ENCODE measurements at regions of chr18 and their contacts with region 1.

Region 1: GRCh38 chr18:58671111-58671631 is at the start of gene MALT1:
- DNase-seq: peak; percentile 88 to 98 (median 92)
- ATAC-seq: peak; percentile 95
- H3K4me3 ChIP-seq: peak within 1 kb of the TSS; percentile 95
- H3K4me3 Mint-ChIP-seq: peak within 1 kb of the TSS; percentile 93 to 98 (median 96)
- H3K27ac ChIP-seq: peak within 1 kb of the TSS; percentile 88
- H3K27ac Mint-ChIP-seq: peak within 1 kb of the TSS; percentile 92 to 96 (median 95)
- H3K4me1 ChIP-seq: peaks cover 26 to 34% of the 10 kb centered on the region in 2 donors
- H3K4me1 Mint-ChIP-seq: peaks cover 36 to 70% (median 58%) of the 10 kb centered on the region in 7 donors
- H3K27me3 ChIP-seq: no peaks in the 10 kb centered on the region
- H3K27me3 Mint-ChIP-seq: peaks cover 0 to 6% (median 0%) of the 10 kb centered on the region in 5 donors
- total RNA-seq, gene MALT1: 50.0 to 101 (median 80.0) TPM

Region 2: GRCh38 chr18:57466745-57467409 is 1204.3 kb before region 1 on chr18:
- CTCF ChIA-PET with region 1: no interaction called
- POLR2A ChIA-PET with region 1: no interaction called
- intact Hi-C with region 1: no loop called
- DNase-seq: no peak
- ATAC-seq: no peak
- H3K4me3 ChIP-seq: no peak overlapping the region
- H3K4me3 Mint-ChIP-seq: no peak overlapping the region
- H3K27ac ChIP-seq: no peak overlapping the region
- H3K27ac Mint-ChIP-seq: no peak overlapping the region
- H3K4me1 ChIP-seq: no peaks in the 10 kb centered on the region
- H3K4me1 Mint-ChIP-seq: no peaks in the 10 kb centered on the region
- H3K27me3 ChIP-seq: no peaks in the 10 kb centered on the region
- H3K27me3 Mint-ChIP-seq: peaks cover 2 to 51% (median 32%) of the 10 kb centered on the region in 5 donors

Region 3: GRCh38 chr18:58605027-58606020 is 65.8 kb before region 1 on chr18:
- CTCF ChIA-PET with region 1: no interaction called
- POLR2A ChIA-PET with region 1: interaction called, 6 read pairs
- intact Hi-C with region 1: loop called in 1 of 2 experiments (anchors 2 kb)
- DNase-seq: peak in 6 of 9 donors; percentile 12 to 54 (median 35)
- ATAC-seq: peak; percentile 74
- H3K4me3 ChIP-seq: no peak overlapping the region
- H3K4me3 Mint-ChIP-seq: peak overlapping the region in 9 of 10 donors; percentile 14 to 76 (median 46)
- H3K27ac ChIP-seq: no peak overlapping the region
- H3K27ac Mint-ChIP-seq: peak overlapping the region in 8 of 9 donors; percentile 1 to 79 (median 50)
- H3K4me1 ChIP-seq: peaks cover 0 to 48% of the 10 kb centered on the region in 2 donors
- H3K4me1 Mint-ChIP-seq: peaks cover 25 to 62% (median 51%) of the 10 kb centered on the region in 7 donors
- H3K27me3 ChIP-seq: no peaks in the 10 kb centered on the region
- H3K27me3 Mint-ChIP-seq: peaks cover 0 to 8% (median 0%) of the 10 kb centered on the region in 5 donors

Region 4: GRCh38 chr18:58631301-58631700 is 39.9 kb before region 1 on chr18:
- CTCF ChIA-PET with region 1: no interaction called
- POLR2A ChIA-PET with region 1: interaction called, 28 read pairs
- intact Hi-C with region 1: loop called in 1 of 2 experiments (anchors 1 kb)
- DNase-seq: no peak
- ATAC-seq: no peak
- H3K4me3 ChIP-seq: no peak overlapping the region
- H3K4me3 Mint-ChIP-seq: no peak overlapping the region
- H3K27ac ChIP-seq: no peak overlapping the region
- H3K27ac Mint-ChIP-seq: no peak overlapping the region
- H3K4me1 ChIP-seq: peaks cover 0 to 16% of the 10 kb centered on the region in 2 donors
- H3K4me1 Mint-ChIP-seq: peaks cover 12 to 57% (median 38%) of the 10 kb centered on the region in 7 donors
- H3K27me3 ChIP-seq: no peaks in the 10 kb centered on the region
- H3K27me3 Mint-ChIP-seq: peaks cover 0 to 15% (median 0%) of the 10 kb centered on the region in 5 donors

Region 5: DNA sequence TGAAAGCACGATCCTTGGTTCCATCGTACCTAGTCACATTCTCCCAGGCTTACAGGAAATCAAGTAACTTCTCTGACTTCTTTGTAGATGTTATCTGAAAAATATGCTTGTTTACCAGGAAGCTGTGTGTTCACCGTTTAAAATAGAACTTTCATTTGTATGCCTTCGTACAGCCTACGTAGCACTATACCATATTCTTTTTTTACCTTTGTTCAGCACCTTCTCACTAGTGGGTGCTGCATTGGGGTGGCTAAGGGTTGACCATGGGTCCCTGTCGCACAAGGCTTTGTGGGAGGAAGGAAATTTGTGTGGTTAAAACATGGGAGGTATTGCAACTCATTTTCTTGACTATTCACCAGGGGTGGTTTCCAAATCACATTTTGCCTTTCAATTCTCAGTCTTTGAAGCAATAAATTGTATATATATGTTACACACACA is 16.7 kb after region 1 on chr18:
- CTCF ChIA-PET with region 1: interaction called, 5 read pairs
- POLR2A ChIA-PET with region 1: interaction called, 236 read pairs
- intact Hi-C with region 1: loop called (anchors 1 kb)
- DNase-seq: peak in 8 of 9 donors; percentile 66 to 91 (median 86)
- ATAC-seq: peak; percentile 97
- H3K4me3 ChIP-seq: peak overlapping the region; percentile 15
- H3K4me3 Mint-ChIP-seq: peak overlapping the region; percentile 47 to 93 (median 87)
- H3K27ac ChIP-seq: peak overlapping the region; percentile 68
- H3K27ac Mint-ChIP-seq: peak overlapping the region in 8 of 9 donors; percentile 92 to 99 (median 96)
- H3K4me1 ChIP-seq: peaks cover 35 to 72% of the 10 kb centered on the region in 2 donors
- H3K4me1 Mint-ChIP-seq: peaks cover 43 to 89% (median 82%) of the 10 kb centered on the region in 7 donors
- H3K27me3 ChIP-seq: no peaks in the 10 kb centered on the region
- H3K27me3 Mint-ChIP-seq: no peaks in the 10 kb centered on the region

Region 6: GRCh38 chr18:58761241-58761969 is 90.2 kb after region 1 on chr18:
- CTCF ChIA-PET with region 1: interaction called, 11 read pairs
- POLR2A ChIA-PET with region 1: interaction called, 5 read pairs
- intact Hi-C with region 1: loop called (anchors 1 kb)
- DNase-seq: peak in 1 of 9 donors; percentile 4
- ATAC-seq: no peak
- H3K4me3 ChIP-seq: no peak overlapping the region
- H3K4me3 Mint-ChIP-seq: peak overlapping the region in 3 of 10 donors; percentile 0 to 69 (median 36)
- H3K27ac ChIP-seq: no peak overlapping the region
- H3K27ac Mint-ChIP-seq: peak overlapping the region in 1 of 9 donors; percentile 65
- H3K4me1 ChIP-seq: peaks cover 6 to 15% of the 10 kb centered on the region in 2 donors
- H3K4me1 Mint-ChIP-seq: peaks cover 16 to 56% (median 45%) of the 10 kb centered on the region in 7 donors
- H3K27me3 ChIP-seq: peaks cover 0 to 6% of the 10 kb centered on the region in 2 donors
- H3K27me3 Mint-ChIP-seq: peaks cover 8 to 36% (median 17%) of the 10 kb centered on the region in 5 donors

Measured in naive thymus-derived CD4-positive, alpha-beta T cell (primary cell).